CD8-positive, alpha-beta memory T cell (primary cell): ENCODE measurements at regions of chr11 and their contacts with region 1.

Region 1: DNA sequence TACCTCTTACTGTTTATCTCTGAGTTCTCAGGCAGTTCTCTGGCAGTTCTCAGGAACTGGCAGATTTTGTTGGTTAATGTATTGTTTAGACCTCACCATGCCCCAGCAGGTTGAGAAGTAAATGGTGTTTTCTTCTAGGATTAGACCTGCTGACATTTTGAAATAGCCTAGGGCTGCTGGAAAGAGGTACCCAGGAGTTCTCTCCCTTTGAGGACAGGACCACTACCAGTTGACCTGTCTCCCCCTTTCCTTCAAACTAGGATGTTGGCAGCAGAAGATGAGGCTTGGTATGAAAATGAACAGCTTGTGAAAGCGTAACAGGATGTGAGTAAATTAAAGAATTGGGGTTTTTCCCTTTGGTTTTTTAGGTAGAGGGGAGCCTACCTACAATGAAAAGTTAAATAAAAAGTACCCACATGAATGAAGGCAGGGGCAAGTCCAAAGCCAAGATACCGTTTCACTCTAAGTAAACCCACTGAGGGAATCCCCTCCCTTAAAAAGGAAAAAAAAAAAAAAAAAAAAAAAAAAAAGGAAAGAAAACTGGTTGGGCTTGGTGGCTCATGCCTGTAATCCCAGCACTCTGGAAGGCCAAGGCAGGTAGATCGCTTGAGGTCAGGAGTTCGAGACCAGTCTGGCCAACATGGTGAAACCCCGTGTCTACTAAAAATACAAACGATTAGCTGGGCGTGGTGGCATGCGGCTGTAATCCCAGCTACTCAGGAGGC is 96.2 kb downstream of the PDHX start:
- DNase-seq: peak in 3 of 5 donors; percentile 46 to 62 (median 48)
- H3K4me3 ChIP-seq: no peak overlapping the region
- H3K4me3 Mint-ChIP-seq: peak overlapping the region; percentile 25 to 81 (median 56)
- H3K27ac ChIP-seq: no peak overlapping the region
- H3K27ac Mint-ChIP-seq: peak overlapping the region; percentile 81 to 99 (median 92)
- H3K4me1 ChIP-seq: peaks cover 28% of the 10 kb centered on the region
- H3K4me1 Mint-ChIP-seq: peaks cover 31 to 62% (median 41%) of the 10 kb centered on the region in 3 donors
- H3K27me3 ChIP-seq: no peaks in the 10 kb centered on the region
- H3K27me3 Mint-ChIP-seq: peaks cover 0 to 2% of the 10 kb centered on the region in 2 donors

Region 2: DNA sequence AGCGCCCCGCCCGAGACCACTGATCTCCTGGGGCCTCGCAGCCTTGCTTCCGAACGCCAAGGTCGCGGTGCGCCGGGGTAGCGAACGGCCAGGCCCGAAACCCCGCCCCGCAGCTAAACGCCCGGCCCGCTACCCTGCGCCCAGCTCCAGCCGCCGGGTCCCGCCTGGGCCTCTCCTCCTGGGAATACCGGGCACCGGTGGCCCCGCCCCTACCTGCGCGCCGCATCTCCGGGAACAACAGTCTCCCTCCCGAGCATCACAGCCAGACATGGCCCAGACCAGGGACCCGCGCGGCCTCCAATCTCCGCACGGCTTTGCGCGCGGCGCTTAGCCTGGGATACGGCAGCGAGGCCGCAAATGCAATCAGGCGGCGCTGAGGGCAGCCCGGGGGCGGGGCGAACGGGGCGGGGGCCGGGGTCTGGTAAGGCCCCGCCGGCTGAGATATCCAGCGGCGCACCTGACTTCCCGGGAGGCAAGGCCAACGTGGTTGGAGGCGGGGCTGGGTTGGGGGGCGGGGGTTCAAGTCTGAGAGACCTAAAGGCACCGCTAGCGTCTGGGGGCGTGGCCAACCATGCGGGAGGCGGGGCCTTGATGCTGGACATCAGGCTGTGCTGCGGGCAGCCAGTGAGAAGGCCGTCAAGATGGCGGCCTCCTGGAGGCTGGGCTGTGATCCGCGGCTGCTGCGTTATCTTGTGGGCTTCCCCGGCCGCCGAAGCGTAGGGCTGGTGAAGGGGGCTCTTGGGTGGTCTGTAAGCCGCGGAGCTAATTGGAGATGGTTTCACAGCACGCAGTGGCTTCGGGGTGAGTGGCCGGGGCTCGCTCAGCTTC is 96.4 kb before region 1 on chr11 and contains the starts of genes APIP and PDHX:
- CTCF ChIA-PET with region 1: no interaction called
- POLR2A ChIA-PET with region 1: no interaction called
- DNase-seq: peak; percentile 82 to 98 (median 86)
- H3K4me3 ChIP-seq: peak within 1 kb of the TSS; percentile 93
- H3K4me3 Mint-ChIP-seq: peak within 1 kb of the TSS; percentile 92 to 99 (median 95)
- H3K27ac ChIP-seq: peak within 1 kb of the TSS; percentile 85
- H3K27ac Mint-ChIP-seq: peak within 1 kb of the TSS; percentile 94 to 100 (median 97)
- H3K4me1 ChIP-seq: peaks cover 28% of the 10 kb centered on the region
- H3K4me1 Mint-ChIP-seq: peaks cover 36 to 59% (median 49%) of the 10 kb centered on the region in 3 donors
- H3K27me3 ChIP-seq: no peaks in the 10 kb centered on the region
- H3K27me3 Mint-ChIP-seq: no peaks in the 10 kb centered on the region
- total RNA-seq, gene APIP: 36.4 to 38.8 TPM
- total RNA-seq, gene PDHX: 37.8 to 41.4 TPM

Region 3: GRCh38 chr11:35035894-35036408 is 23.3 kb after region 1 on chr11:
- CTCF ChIA-PET with region 1: no interaction called
- POLR2A ChIA-PET with region 1: no interaction called
- DNase-seq: no peak
- H3K4me3 ChIP-seq: no peak overlapping the region
- H3K4me3 Mint-ChIP-seq: no peak overlapping the region
- H3K27ac ChIP-seq: no peak overlapping the region
- H3K27ac Mint-ChIP-seq: no peak overlapping the region
- H3K4me1 ChIP-seq: peaks cover 24% of the 10 kb centered on the region
- H3K4me1 Mint-ChIP-seq: peaks cover 29 to 58% (median 46%) of the 10 kb centered on the region in 3 donors
- H3K27me3 ChIP-seq: no peaks in the 10 kb centered on the region
- H3K27me3 Mint-ChIP-seq: peaks cover 0 to 3% of the 10 kb centered on the region in 2 donors

Region 4: DNA sequence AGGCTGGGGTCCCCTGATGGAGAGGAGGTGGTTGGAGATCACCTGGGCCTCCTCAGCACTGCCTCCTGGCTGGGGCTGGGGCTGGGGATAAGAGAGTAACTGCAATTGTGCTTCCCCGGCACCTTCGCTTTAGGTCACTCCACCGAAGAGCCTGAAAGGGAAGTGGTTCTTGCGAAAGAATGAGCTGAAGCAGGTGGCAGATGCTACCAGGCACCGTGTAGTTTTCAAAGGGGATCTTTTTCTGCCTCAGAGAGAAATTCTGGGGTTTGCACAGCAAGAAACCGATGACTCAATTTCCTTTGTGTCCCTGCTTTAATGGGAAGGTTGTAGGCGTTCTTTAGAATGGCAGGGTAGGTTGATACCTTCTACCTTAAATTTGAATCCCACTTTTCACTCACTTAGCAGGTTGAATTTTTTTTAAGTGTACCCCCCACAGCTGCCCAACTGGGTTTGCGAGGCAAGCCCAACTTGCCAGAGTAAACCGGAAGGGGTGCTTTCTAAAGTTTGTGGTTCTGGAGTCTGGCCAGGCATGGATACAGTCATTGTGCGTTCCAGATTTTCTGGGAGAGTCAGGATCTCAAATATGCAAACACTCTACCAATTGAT is 131.6 kb after region 1 on chr11:
- CTCF ChIA-PET with region 1: no interaction called
- POLR2A ChIA-PET with region 1: interaction called, 12 read pairs
- DNase-seq: peak; percentile 28 to 80 (median 70)
- H3K4me3 ChIP-seq: peak overlapping the region; percentile 62
- H3K4me3 Mint-ChIP-seq: peak overlapping the region; percentile 91 to 97 (median 95)
- H3K27ac ChIP-seq: peak overlapping the region; percentile 40
- H3K27ac Mint-ChIP-seq: peak overlapping the region; percentile 68 to 98 (median 96)
- H3K4me1 ChIP-seq: peaks cover 75% of the 10 kb centered on the region
- H3K4me1 Mint-ChIP-seq: peaks cover 78 to 83% (median 81%) of the 10 kb centered on the region in 3 donors
- H3K27me3 ChIP-seq: no peaks in the 10 kb centered on the region
- H3K27me3 Mint-ChIP-seq: no peaks in the 10 kb centered on the region